Testis (tissue), 5 donors: ENCODE measurements at regions of chr14 and their contacts with region 1.

Region 1: GRCh38 chr14:57326253-57326652 is 57.5 kb downstream of the AP5M1 start:
- DNase-seq: no peak
- H3K4me3 ChIP-seq: no peak overlapping the region
- H3K27ac ChIP-seq: no peak overlapping the region
- H3K4me1 ChIP-seq: no peaks in the 10 kb centered on the region
- H3K27me3 ChIP-seq: no peaks in the 10 kb centered on the region
- CTCF ChIP-seq: no peak
- POLR2A ChIP-seq: no peak

Region 2: DNA sequence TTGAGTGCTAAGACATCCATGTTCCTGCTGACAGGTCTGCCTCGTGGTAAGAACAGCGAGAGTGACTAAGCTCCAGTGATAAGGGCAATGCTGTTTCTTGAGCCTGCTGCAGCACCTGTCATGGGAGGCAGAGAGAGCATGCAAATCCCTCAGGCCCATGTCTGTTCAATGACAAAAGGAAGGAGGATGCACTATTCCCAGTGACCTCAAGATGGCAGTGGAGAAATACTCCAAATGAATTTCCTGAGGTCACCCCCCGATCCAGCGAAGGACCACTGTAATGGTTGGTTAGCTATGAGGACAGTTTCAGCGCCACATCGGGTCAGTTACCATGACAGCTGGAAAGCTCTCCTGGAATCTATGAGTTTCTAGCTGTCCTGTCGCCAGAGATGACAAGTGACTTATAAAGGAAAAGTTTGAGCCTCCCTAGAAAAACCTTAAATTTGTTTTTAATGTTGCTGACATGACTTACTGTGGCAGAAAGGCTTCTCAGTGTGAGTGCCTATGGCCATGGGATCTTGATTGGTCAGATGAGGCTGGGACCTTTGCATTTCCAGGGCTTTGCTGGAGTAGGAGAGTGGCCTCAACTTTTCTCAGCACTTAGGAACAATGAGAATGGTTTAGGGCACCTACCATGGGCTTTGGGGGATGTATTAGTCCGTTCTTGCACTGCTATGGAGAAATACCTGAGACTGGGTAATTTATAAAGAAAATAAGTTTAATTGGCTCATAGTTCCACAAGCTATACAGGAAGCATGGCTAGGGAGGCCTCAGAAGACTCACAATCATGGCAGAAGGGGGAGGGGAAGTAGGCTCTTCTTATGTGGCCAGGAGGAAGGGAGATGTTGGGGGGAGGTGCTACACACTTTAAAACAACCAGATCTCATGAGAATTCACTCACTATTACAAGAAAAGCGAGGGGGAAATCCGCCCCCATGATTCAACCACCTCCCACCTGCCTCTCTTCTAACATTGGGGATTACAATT is 834.7 kb before region 1 on chr14:
- intact Hi-C with region 1: loop called (anchors 10 kb)
- DNase-seq: peak; percentile 59
- H3K4me3 ChIP-seq: no peak overlapping the region
- H3K27ac ChIP-seq: no peak overlapping the region
- H3K4me1 ChIP-seq: no peaks in the 10 kb centered on the region
- H3K27me3 ChIP-seq: no peaks in the 10 kb centered on the region
- CTCF ChIP-seq: peak; percentile 48 to 79 (median 66)
- POLR2A ChIP-seq: no peak

Region 3: DNA sequence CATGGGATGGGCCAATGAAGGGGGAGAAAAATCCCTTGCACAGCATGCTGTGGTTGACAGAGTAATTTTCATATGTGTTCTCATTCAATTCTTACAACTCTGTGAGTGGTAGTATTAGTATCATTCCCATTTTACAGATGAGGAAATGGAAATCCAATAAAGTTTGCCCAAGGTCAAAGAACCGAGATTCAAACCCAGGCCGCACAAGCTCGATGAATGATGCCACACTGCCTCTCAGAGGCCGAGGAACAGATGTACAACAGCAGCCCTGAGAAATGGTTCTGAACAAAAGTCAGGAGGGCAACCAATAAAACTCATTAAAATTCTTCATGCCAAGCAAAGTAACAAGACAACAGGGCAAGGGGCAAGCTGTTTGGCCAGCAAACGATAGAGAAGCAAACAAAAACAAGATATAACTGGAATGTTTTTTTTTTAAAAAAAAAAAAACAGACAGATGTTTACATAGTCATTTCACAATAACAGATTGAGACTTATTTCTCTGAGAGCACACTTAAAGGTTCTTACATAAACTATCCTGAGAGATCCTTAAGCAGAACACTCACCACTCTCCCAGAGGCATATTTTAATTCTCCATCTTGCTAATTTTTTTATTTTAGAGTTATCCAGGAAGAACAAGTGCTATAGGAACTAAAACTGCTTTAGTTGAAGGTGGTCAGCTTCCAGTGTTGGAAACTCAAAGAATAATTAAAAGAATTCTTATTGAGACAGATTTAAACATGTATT is 143.3 kb before region 1 on chr14:
- intact Hi-C with region 1: no loop called
- DNase-seq: peak; percentile 36
- H3K4me3 ChIP-seq: no peak overlapping the region
- H3K27ac ChIP-seq: no peak overlapping the region
- H3K4me1 ChIP-seq: no peaks in the 10 kb centered on the region
- H3K27me3 ChIP-seq: no peaks in the 10 kb centered on the region
- CTCF ChIP-seq: peak in 1 of 3 experiments; percentile 8
- POLR2A ChIP-seq: no peak